ENCODE measurements at regions of chr17 and their contacts with region 1.

Region 1: GRCh38 chr17:77783991-77784820 is 174.3 kb upstream of the TNRC6C start:
- DNase-seq: peak; percentile 51 to 92 (median 64)
- ATAC-seq: peak; percentile 93
- H3K4me3 ChIP-seq: peak overlapping the region; percentile 16
- H3K4me3 Mint-ChIP-seq: peak overlapping the region; percentile 2
- H3K27ac ChIP-seq: peak overlapping the region; percentile 64 to 77
- H3K27ac Mint-ChIP-seq: peak overlapping the region; percentile 96
- H3K4me1 ChIP-seq: peaks cover 28% of the 10 kb centered on the region
- H3K4me1 Mint-ChIP-seq: peaks cover 14% of the 10 kb centered on the region
- H3K27me3 ChIP-seq: no peaks in the 10 kb centered on the region
- H3K27me3 Mint-ChIP-seq: no peaks in the 10 kb centered on the region
- CTCF ChIP-seq: no peak

Region 2: DNA sequence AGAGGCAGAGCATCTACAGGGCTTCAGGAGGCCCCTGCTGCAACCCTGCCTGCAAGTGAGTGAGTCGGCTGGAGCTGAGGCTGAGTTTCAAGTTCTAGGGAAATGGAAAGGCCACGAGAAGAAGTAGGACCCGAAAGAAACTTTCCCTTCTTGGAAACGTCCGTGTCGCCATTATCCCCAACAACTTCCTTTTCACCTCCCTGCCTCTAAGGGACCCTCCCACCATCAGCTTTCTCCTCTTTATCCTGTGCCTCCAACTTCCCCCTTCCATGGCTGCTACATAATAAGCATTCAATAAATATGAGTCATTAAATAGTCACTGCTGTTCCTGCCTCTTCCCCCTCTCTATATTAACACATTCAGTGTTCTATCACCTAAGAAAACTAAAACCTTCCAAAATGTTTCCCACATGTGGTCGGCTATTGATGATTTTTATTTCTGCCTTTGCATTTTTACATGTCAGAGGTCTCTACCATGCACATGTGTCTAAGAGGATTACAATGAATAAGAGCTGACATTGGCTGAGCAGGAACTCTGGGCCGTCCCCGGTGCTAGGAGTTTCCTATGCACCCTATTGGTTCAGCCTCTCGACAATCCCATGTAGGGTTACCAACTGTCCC is 58.4 kb after region 1 on chr17:
- CTCF ChIA-PET with region 1: no interaction called
- POLR2A ChIA-PET with region 1: interaction called, 12 read pairs
- intact Hi-C with region 1: loop called in 1 of 2 experiments (anchors 2 kb)
- DNase-seq: peak in 3 of 14 experiments; percentile 25 to 66 (median 54)
- ATAC-seq: no peak
- H3K4me3 ChIP-seq: no peak overlapping the region
- H3K4me3 Mint-ChIP-seq: no peak overlapping the region
- H3K27ac ChIP-seq: no peak overlapping the region
- H3K27ac Mint-ChIP-seq: peak overlapping the region; percentile 92
- H3K4me1 ChIP-seq: peaks cover 61% of the 10 kb centered on the region
- H3K4me1 Mint-ChIP-seq: peaks cover 54% of the 10 kb centered on the region
- H3K27me3 ChIP-seq: no peaks in the 10 kb centered on the region
- H3K27me3 Mint-ChIP-seq: no peaks in the 10 kb centered on the region
- CTCF ChIP-seq: no peak